ENCODE measurements at regions of chr11 and their contacts with region 1.

Region 1: GRCh38 chr11:4187055-4187988 is 92.7 kb downstream of the RRM1 start:
- DNase-seq: peak; percentile 87 to 88 (median 88)
- ATAC-seq: peak; percentile 94
- H3K4me3 ChIP-seq: peak overlapping the region; percentile 72
- H3K27ac ChIP-seq: no peak overlapping the region
- H3K4me1 ChIP-seq: peaks cover 14 to 20% of the 10 kb centered on the region in 2 experiments; a peak in 4 of 5 replicates
- H3K27me3 ChIP-seq: peaks cover 0 to 4% of the 10 kb centered on the region in 2 experiments; a peak in 1 of 5 replicates
- CTCF ChIP-seq: peak; percentile 81 to 96 (median 94)
- EP300 ChIP-seq: no peak
- POLR2A ChIP-seq: no peak
- RAD21 ChIP-seq: peak; percentile 93 to 95

Region 2: GRCh38 chr11:4118107-4118506 is 69.2 kb before region 1 on chr11:
- CTCF ChIA-PET with region 1: no interaction called
- POLR2A ChIA-PET with region 1: no interaction called
- in situ Hi-C with region 1: no loop called
- intact Hi-C with region 1: no loop called
- DNase-seq: no peak
- ATAC-seq: no peak
- H3K4me3 ChIP-seq: no peak overlapping the region
- H3K27ac ChIP-seq: no peak overlapping the region
- H3K4me1 ChIP-seq: no peaks in the 10 kb centered on the region
- H3K27me3 ChIP-seq: no peaks in the 10 kb centered on the region
- CTCF ChIP-seq: no peak
- EP300 ChIP-seq: no peak
- POLR2A ChIP-seq: no peak
- RAD21 ChIP-seq: no peak

Region 3: GRCh38 chr11:4493480-4493818 is 306.1 kb after region 1 on chr11:
- CTCF ChIA-PET with region 1: interaction called, 30 read pairs
- POLR2A ChIA-PET with region 1: no interaction called
- in situ Hi-C with region 1: loop called (anchors 5 kb)
- intact Hi-C with region 1: loop called (anchors 1 kb)
- DNase-seq: no peak
- ATAC-seq: no peak
- H3K4me3 ChIP-seq: no peak overlapping the region
- H3K27ac ChIP-seq: no peak overlapping the region
- H3K4me1 ChIP-seq: no peaks in the 10 kb centered on the region
- H3K27me3 ChIP-seq: peaks cover 12 to 20% of the 10 kb centered on the region in 2 experiments; a peak in 3 of 5 replicates
- CTCF ChIP-seq: no peak
- EP300 ChIP-seq: no peak
- POLR2A ChIP-seq: no peak
- RAD21 ChIP-seq: no peak

Region 4: GRCh38 chr11:4539603-4540219 is 352.4 kb after region 1 on chr11:
- CTCF ChIA-PET with region 1: interaction called, 30 read pairs
- POLR2A ChIA-PET with region 1: interaction called, 4 read pairs
- in situ Hi-C with region 1: loop called (anchors 10 kb)
- intact Hi-C with region 1: loop called (anchors 1 kb)
- DNase-seq: peak; percentile 50 to 63 (median 54)
- ATAC-seq: peak; percentile 92
- H3K4me3 ChIP-seq: no peak overlapping the region
- H3K27ac ChIP-seq: no peak overlapping the region
- H3K4me1 ChIP-seq: no peaks in the 10 kb centered on the region
- H3K27me3 ChIP-seq: no peaks in the 10 kb centered on the region; a peak in 1 of 5 replicates
- CTCF ChIP-seq: peak; percentile 66 to 76 (median 74)
- EP300 ChIP-seq: no peak
- POLR2A ChIP-seq: no peak
- RAD21 ChIP-seq: peak; percentile 54 to 68

Region 5: DNA sequence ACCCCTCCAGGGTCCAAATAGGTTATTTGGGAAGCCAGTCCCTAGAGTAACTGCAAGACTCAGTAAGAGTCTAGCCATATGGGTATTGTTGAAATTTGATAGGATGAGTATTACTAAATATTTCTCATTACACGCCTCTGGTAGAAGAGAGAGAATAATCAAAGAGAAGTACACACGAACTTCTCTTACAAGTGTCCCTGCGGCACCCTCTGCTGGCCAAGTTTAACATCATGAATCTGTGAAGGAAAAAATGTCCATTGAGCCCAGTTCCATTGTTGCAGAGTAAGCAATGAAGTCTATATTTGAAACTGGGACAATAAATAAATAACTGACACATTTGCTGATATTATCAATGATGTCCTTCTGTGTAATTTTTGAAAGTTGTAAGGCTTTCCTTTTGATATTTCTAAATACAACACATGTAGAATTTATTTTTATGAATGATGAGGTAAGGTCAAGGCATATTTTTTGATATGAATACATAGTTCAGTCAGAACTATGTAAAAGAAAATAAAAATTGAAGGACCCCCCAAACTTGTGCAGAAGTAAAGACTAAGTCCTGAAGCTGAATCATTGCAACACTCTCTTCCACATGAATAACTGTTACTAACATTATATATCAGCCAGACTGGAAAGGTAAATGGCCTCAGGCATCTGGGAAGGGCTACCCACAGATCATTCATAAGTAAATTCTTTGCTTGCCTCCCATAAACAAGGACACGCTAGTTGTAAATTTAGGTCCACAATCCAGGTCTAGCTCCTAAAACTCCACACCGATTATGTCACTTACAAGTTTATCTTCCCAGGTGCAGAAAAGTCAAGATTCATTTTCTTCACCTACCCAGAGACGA is 817.3 kb after region 1 on chr11:
- CTCF ChIA-PET with region 1: interaction called, 5 read pairs
- POLR2A ChIA-PET with region 1: no interaction called
- in situ Hi-C with region 1: loop called (anchors 25 kb)
- intact Hi-C with region 1: loop called (anchors 1 kb)
- DNase-seq: peak; percentile 29 to 71 (median 36)
- ATAC-seq: peak; percentile 78
- H3K4me3 ChIP-seq: no peak overlapping the region
- H3K27ac ChIP-seq: no peak overlapping the region
- H3K4me1 ChIP-seq: no peaks in the 10 kb centered on the region
- H3K27me3 ChIP-seq: no peaks in the 10 kb centered on the region
- CTCF ChIP-seq: peak; percentile 65 to 76 (median 68); a peak in 4 of 6 replicates
- EP300 ChIP-seq: no peak
- POLR2A ChIP-seq: no peak
- RAD21 ChIP-seq: peak; percentile 75 to 86